Endothelial cell of umbilical vein (primary cell): ENCODE measurements at regions of chr3 and their contacts with region 1.

Region 1: GRCh38 chr3:190424478-190425439 is 24.9 kb downstream of the TMEM207 start:
- DNase-seq: peak; percentile 76
- H3K4me3 ChIP-seq: no peak overlapping the region
- H3K27ac ChIP-seq: no peak overlapping the region
- H3K4me1 ChIP-seq: no peaks in the 10 kb centered on the region
- H3K27me3 ChIP-seq: peaks cover 0 to 2% of the 10 kb centered on the region in 2 experiments
- CTCF ChIP-seq: peak; percentile 52
- POLR2A ChIP-seq: no peak

Region 2: GRCh38 chr3:189961525-189962161 is 463.1 kb before region 1 on chr3:
- CTCF ChIA-PET with region 1: interaction called, 75 read pairs
- POLR2A ChIA-PET with region 1: no interaction called
- dilution Hi-C with region 1: no loop called
- intact Hi-C with region 1: loop called (anchors 1 kb)
- DNase-seq: peak; percentile 89
- H3K4me3 ChIP-seq: no peak overlapping the region
- H3K27ac ChIP-seq: no peak overlapping the region
- H3K4me1 ChIP-seq: no peaks in the 10 kb centered on the region
- H3K27me3 ChIP-seq: no peaks in the 10 kb centered on the region
- CTCF ChIP-seq: peak; percentile 77 to 90
- POLR2A ChIP-seq: no peak

Region 3: DNA sequence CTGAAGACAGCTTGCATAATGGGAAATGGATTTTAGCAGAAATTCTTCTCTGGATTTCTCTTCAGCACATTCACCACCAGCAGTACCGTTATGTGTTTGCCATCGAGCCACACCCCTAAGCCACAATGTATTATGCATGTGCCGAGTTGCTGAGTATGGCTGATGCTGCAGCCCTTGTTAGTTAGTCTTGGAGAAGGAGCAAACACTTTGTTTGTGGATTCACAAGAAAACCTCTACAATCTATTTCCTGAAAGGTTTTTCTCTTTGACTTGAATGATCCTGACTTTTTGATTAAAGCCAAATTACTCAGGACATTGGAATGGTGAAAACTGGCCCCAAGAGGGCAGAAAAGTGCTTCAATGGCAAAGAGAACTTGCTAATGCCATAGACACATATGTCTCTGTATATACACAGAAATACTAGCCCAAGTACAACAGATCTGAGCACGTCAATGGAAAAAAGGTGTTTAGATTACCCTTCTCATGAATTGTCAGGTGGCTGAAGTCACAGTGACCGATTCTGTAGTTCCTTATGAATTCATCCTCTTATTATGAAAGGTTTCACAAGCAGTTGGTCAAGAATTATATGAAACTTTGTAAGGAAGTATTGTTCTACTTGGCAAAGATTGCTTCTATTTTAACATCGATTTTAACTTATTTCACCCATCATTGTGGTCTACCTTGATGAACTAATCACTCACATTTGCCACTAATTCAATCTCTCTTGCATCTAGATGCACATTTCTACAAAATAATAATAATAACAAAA is 407.1 kb before region 1 on chr3:
- CTCF ChIA-PET with region 1: interaction called, 4 read pairs
- POLR2A ChIA-PET with region 1: no interaction called
- dilution Hi-C with region 1: no loop called
- intact Hi-C with region 1: loop called (anchors 2 kb)
- DNase-seq: peak; percentile 84
- H3K4me3 ChIP-seq: no peak overlapping the region
- H3K27ac ChIP-seq: no peak overlapping the region
- H3K4me1 ChIP-seq: peaks cover 3% of the 10 kb centered on the region
- H3K27me3 ChIP-seq: no peaks in the 10 kb centered on the region
- CTCF ChIP-seq: peak; percentile 28 to 47
- POLR2A ChIP-seq: no peak

Region 4: DNA sequence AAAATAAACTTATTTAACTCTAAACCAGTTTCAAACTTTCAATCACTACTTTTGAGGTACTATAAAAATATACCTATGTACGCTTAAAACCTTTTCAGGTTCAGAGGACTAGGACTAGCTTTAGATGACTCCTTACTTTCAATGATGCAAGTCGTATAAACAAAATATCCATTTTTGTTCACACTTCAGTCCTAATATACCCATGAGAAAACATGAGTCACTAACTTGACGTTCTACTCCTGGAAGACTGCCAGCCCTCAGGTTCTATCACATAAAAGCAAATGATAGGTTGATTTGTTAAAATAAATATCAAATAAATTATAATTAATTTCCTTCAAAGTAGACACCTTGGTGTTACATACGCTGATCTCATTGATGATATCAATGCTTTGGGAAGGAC is 293.4 kb before region 1 on chr3:
- CTCF ChIA-PET with region 1: no interaction called
- POLR2A ChIA-PET with region 1: no interaction called
- dilution Hi-C with region 1: no loop called
- intact Hi-C with region 1: no loop called
- DNase-seq: peak; percentile 50
- H3K4me3 ChIP-seq: no peak overlapping the region
- H3K27ac ChIP-seq: no peak overlapping the region
- H3K4me1 ChIP-seq: no peaks in the 10 kb centered on the region
- H3K27me3 ChIP-seq: peaks cover 3 to 4% of the 10 kb centered on the region in 2 experiments
- CTCF ChIP-seq: no peak
- POLR2A ChIP-seq: no peak

Region 5: GRCh38 chr3:190224863-190225692 is 199.7 kb before region 1 on chr3:
- CTCF ChIA-PET with region 1: interaction called, 131 read pairs
- POLR2A ChIA-PET with region 1: no interaction called
- dilution Hi-C with region 1: no loop called
- intact Hi-C with region 1: loop called (anchors 1 kb)
- DNase-seq: peak; percentile 58
- H3K4me3 ChIP-seq: no peak overlapping the region
- H3K27ac ChIP-seq: no peak overlapping the region
- H3K4me1 ChIP-seq: peaks cover 10% of the 10 kb centered on the region
- H3K27me3 ChIP-seq: no peaks in the 10 kb centered on the region
- CTCF ChIP-seq: peak; percentile 20 to 24
- POLR2A ChIP-seq: no peak

Region 6: DNA sequence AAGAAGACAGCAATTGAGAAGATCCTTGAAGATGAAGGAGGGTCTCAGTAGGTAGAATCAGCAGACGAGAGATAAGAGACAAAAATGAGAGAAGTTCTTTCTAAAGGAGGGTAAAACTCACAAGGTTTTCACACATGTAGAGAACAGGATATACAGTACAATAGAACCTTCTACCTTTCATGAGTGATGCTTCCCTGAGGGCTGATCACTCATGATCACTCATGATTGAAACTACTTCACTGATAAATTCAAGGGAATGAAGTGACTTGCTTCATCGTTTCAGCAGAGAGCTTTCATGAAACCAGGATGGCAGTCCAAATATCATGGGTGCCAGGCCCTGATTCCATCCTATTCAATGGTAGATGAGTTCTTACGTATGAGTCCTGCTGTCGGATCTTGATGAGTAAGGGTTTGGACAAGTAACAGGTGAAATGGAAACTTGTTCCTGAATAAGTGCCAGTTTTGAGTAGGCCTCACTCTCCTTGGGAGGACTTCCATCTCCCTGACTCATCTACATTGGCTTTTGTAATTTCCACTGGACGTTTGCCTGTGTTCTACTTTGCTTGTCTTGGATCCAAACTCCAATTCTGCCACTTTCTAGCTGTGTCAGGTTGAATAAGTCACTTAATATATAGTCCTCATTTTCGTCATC is 46.4 kb before region 1 on chr3:
- CTCF ChIA-PET with region 1: interaction called, 36 read pairs
- POLR2A ChIA-PET with region 1: no interaction called
- dilution Hi-C with region 1: no loop called
- intact Hi-C with region 1: no loop called
- DNase-seq: no peak
- H3K4me3 ChIP-seq: no peak overlapping the region
- H3K27ac ChIP-seq: no peak overlapping the region
- H3K4me1 ChIP-seq: no peaks in the 10 kb centered on the region
- H3K27me3 ChIP-seq: no peaks in the 10 kb centered on the region
- CTCF ChIP-seq: no peak
- POLR2A ChIP-seq: no peak

Region 7: DNA sequence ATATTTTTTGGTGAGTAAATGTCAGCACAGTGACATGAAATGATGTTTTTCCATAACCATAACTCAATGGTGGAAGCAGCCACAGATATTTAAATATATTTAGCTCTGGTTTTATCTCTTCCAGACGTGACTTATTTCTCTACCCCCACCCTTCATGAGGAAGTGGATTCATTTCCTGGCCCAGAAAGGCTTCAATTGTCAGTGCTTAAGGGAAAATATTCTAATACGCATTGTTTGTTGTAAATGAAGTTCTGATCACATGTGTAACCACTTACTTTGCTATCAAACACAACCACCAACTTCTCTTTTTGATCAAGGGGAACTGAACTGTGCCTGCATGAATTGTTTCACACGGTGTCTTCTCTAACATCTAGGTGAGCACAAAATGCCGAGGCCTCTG is 22.8 kb before region 1 on chr3:
- CTCF ChIA-PET with region 1: interaction called, 14 read pairs
- POLR2A ChIA-PET with region 1: no interaction called
- dilution Hi-C with region 1: no loop called
- intact Hi-C with region 1: no loop called
- DNase-seq: peak; percentile 77
- H3K4me3 ChIP-seq: no peak overlapping the region
- H3K27ac ChIP-seq: peak overlapping the region; percentile 61
- H3K4me1 ChIP-seq: peaks cover 13% of the 10 kb centered on the region
- H3K27me3 ChIP-seq: no peaks in the 10 kb centered on the region
- CTCF ChIP-seq: no peak
- POLR2A ChIP-seq: no peak

Region 8: DNA sequence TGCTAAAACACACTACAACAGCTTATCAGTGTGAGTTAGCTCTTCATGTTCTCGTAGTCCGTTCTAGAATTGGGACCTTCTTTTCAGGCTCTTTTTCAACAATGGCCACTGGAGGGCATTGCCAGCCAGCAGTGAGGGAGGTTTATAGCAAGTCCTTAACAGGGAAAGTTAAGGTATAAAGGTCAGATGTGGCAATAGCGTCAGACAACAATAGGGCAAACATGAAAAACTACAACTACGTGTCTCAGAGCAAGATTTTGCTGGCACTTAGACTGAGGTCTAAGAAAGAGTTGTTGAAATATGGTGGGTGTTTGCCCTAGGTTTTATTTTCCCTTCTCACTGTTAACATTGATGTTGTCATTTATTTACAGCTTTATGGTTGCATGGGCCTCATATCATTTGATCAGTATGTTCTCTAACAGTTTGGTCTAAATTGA is 276.4 kb after region 1 on chr3:
- CTCF ChIA-PET with region 1: interaction called, 12 read pairs
- POLR2A ChIA-PET with region 1: no interaction called
- dilution Hi-C with region 1: no loop called
- intact Hi-C with region 1: loop called (anchors 5 kb)
- DNase-seq: peak; percentile 37
- H3K4me3 ChIP-seq: no peak overlapping the region
- H3K27ac ChIP-seq: no peak overlapping the region
- H3K4me1 ChIP-seq: no peaks in the 10 kb centered on the region
- H3K27me3 ChIP-seq: peaks cover 0 to 2% of the 10 kb centered on the region in 2 experiments
- CTCF ChIP-seq: peak; percentile 24 to 46
- POLR2A ChIP-seq: no peak